ENCODE measurements at regions of chr6 and their contacts with region 1.

Region 1: DNA sequence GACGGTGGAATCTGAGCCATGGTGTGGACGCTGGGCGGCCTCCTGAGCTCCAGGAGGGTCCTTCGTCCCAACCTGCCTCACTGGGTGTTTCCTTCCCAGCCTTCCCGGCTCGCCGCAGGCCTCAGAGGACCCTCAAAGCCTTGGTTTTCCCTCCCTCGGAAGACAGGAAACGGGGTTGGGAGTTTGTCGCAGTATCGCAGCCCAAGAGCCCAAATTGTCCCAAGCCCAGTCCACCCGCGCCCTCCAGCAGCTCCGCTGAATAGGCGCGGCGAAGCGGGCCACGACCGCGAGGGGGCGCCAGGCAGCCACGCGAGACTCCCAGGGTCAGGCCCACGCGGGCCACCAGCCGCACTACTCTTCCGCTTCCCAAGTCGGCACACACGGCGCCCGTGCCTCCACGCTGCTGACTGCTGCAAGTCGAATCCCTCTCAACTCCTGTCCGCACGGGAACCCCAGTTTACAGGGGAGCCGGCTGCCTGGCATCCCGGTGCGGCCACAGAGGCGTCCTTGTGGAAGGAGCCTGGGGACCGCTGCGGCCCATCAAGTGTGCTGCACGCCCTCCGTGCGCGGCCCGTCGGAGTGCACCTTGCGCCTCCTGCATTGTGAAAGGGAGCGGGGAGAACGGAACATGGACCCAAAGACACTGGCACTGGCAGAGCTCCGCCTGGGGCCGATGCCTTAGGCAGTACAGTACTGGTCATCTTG is 40.4 kb upstream of the HMGA1 start:
- H3K4me3 Mint-ChIP-seq: peak overlapping the region; percentile 88
- H3K27ac Mint-ChIP-seq: peak overlapping the region; percentile 42
- H3K4me1 Mint-ChIP-seq: peaks cover 12% of the 10 kb centered on the region
- H3K27me3 Mint-ChIP-seq: peaks cover 33% of the 10 kb centered on the region

Region 2: DNA sequence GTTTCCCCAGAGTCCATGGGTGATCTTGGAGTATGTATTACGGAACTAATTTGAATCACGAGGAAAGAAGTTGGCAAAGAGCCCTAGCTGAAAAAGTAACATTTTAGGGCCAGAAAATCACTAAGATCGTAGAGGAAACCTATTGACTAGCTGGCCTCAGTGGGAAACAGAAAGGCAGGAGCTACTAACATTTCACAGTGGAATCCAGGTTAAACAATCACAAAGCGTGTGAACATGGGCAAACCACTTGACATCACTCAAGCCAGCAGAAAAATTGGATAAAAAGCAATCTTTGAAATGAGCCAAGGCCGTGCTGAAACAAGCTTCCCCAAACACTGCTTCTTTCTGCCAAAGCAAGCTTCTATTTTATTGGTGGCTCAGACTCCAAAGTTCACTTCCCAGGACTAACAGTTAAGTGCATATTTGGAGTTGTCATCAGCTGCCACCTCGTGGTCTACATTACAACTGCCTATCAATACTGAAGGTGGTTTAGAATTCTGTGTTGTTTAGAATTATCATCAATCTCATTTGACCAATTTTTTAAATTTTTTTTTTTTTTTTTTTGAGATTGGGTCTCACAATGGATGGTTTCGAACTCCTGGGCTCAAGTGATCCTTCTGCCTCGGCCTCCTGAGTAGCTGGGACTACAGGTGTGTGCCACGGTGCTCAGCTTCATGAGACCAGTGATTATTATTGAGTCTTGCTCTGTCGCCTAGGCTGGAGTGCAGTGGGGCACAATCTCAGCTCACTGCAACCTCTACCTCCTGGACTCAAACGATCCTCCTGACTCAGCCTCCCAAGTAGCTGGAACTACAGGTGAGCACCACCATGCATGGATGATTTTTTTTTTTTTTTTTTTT is 219.0 kb after region 1 on chr6:
- intact Hi-C with region 1: loop called (anchors 1 kb)
- H3K4me3 Mint-ChIP-seq: no peak overlapping the region
- H3K27ac Mint-ChIP-seq: peak overlapping the region; percentile 50
- H3K4me1 Mint-ChIP-seq: peaks cover 17% of the 10 kb centered on the region
- H3K27me3 Mint-ChIP-seq: no peaks in the 10 kb centered on the region

Measured in dendritic cell treated with granulocyte-macrophage colony-stimulating factor and Interleukin-4, amounts not matched to agents 40 ng/mL and 50 ng/mL, for 4 days (primary cell).